Ovary (tissue), 10 donors: ENCODE measurements at regions of chr2 and their contacts with region 1.

Region 1: DNA sequence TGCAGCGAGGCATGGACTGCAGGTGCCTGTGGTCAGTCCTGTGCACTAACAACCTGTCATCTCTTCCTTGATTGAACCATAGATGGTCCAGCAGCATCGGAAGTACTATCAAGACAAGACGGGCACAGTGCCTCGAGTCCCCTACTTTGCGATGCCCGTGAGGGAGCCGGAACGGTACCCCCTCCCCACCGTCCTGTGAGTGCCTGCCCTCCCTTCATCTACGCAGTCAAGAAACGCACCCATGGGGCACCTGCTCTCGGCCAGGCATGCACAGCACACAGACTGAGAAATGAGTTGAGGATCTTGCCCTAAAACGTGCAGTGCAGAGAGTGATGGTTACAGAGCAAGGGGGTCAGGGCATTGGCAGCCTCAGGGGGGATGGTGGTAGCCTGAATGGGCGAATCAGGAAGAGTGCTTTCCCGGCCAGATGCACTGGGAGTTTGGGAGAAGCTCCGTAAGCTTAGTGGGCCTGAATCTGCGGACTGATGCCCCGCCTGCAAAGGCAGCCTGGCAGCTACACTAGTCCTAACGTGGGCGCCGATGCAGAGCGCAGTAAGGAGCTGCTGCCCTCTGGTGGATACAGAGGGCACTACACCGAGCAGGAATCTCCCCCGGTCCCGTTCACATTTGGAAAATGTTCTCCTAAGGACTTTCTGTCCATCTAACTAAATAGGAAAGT is 63.6 kb downstream of the CIB4 start:
- DNase-seq: peak; percentile 48 to 79 (median 64)
- H3K4me3 ChIP-seq: no peak overlapping the region
- H3K27ac ChIP-seq: no peak overlapping the region
- H3K4me1 ChIP-seq: no peaks in the 10 kb centered on the region
- H3K27me3 ChIP-seq: no peaks in the 10 kb centered on the region
- CTCF ChIP-seq: peak; percentile 71 to 84 (median 78)
- EP300 ChIP-seq: no peak
- POLR2A ChIP-seq: no peak

Region 2: DNA sequence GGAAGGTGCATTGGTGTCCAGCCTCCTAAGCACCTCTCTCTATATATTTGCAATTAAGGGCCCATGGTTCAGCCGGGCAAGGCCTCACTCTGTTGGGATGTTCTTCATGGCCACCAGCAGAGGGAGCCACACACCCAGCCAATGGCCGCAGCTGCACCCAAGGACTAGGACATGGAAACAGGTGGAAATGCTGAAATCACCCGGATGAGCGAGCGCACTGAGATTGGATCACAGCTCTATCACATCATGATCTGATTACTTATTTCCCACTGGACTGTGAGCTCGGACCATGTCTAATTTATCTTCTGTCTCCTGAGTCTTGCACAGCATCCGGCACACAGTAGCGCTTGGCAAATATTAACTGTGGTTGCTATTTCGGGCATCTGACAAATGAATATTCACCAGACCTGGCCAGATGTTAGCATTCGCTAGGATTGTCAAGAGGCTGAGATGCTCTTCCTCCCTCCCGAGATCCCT is 626.5 kb before region 1 on chr2:
- intact Hi-C with region 1: loop called in 1 of 4 experiments (anchors 10 kb)
- DNase-seq: peak; percentile 64 to 84 (median 81)
- H3K4me3 ChIP-seq: no peak overlapping the region
- H3K27ac ChIP-seq: no peak overlapping the region
- H3K4me1 ChIP-seq: no peaks in the 10 kb centered on the region
- H3K27me3 ChIP-seq: no peaks in the 10 kb centered on the region
- CTCF ChIP-seq: peak; percentile 75 to 87 (median 82)
- EP300 ChIP-seq: no peak
- POLR2A ChIP-seq: no peak

Region 3: DNA sequence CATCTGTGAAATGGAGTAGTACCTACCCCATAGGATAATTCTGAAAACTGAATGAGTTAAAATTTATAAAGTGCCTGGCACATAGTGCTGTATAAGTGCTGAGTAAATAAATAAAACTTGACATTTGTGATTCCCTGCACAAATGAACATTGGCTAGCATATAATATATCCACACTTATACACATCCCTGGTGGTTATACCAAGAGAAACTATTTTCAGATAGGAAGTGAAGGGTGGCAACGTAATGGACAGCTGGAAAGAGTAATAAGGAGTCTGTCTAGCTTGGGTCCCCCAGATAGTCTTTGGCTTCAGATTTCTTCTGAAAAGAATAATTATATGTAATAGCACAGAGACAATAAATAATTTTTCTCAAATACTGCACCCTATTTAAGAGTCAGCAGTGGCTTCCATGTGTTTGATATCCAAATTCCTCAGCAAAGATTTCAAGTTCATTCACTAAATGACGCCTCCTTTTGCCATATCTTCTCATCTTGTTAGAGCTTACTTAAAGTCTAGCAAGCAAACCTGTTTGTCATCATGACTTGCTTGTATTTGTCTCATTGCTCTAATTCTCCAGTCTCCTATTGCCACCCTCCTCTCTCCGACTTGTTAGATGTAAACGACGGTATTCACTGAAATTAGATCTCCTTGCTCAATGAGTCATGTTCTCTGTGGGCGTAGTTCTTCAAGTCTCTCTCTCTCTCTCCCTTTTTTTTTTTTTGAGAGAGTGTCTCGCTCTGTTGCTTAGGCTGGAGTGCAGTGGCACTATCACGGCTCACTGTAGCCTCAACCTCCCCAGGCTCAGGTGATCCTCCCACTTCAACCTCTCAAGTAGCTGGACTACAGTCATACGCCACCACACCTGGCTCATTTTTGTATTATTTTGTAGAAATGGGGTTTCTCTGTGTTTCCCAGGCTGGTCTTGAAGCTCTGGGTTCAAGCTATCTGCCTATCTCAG is 222.3 kb before region 1 on chr2:
- intact Hi-C with region 1: loop called in 1 of 4 experiments (anchors 10 kb)
- DNase-seq: no peak
- H3K4me3 ChIP-seq: no peak overlapping the region
- H3K27ac ChIP-seq: no peak overlapping the region
- H3K4me1 ChIP-seq: no peaks in the 10 kb centered on the region
- H3K27me3 ChIP-seq: no peaks in the 10 kb centered on the region
- CTCF ChIP-seq: no peak
- EP300 ChIP-seq: no peak
- POLR2A ChIP-seq: no peak